Upper lobe of right lung (tissue), 1 donor: ENCODE measurements at regions of chr9 and their contacts with region 1.

Region 1: GRCh38 chr9:73081979-73082657 is 69.5 kb upstream of the ANXA1 start:
- DNase-seq: no peak
- ATAC-seq: peak; percentile 78
- H3K4me3 ChIP-seq: no peak overlapping the region
- H3K27ac ChIP-seq: no peak overlapping the region
- H3K4me1 ChIP-seq: no peaks in the 10 kb centered on the region
- H3K27me3 ChIP-seq: no peaks in the 10 kb centered on the region
- CTCF ChIP-seq: peak; percentile 82

Region 2: GRCh38 chr9:72856972-72857623 is 225.0 kb before region 1 on chr9:
- intact Hi-C with region 1: loop called (anchors 10 kb)
- DNase-seq: no peak
- ATAC-seq: peak; percentile 73
- H3K4me3 ChIP-seq: no peak overlapping the region
- H3K27ac ChIP-seq: no peak overlapping the region
- H3K4me1 ChIP-seq: peaks cover 9% of the 10 kb centered on the region
- H3K27me3 ChIP-seq: no peaks in the 10 kb centered on the region
- CTCF ChIP-seq: peak; percentile 66

Region 3: GRCh38 chr9:72997387-72997995 is 84.6 kb before region 1 on chr9:
- intact Hi-C with region 1: loop called (anchors 10 kb)
- DNase-seq: peak; percentile 56
- ATAC-seq: peak; percentile 48
- H3K4me3 ChIP-seq: no peak overlapping the region
- H3K27ac ChIP-seq: peak overlapping the region; percentile 6
- H3K4me1 ChIP-seq: peaks cover 16% of the 10 kb centered on the region
- H3K27me3 ChIP-seq: no peaks in the 10 kb centered on the region
- CTCF ChIP-seq: no peak

Region 4: DNA sequence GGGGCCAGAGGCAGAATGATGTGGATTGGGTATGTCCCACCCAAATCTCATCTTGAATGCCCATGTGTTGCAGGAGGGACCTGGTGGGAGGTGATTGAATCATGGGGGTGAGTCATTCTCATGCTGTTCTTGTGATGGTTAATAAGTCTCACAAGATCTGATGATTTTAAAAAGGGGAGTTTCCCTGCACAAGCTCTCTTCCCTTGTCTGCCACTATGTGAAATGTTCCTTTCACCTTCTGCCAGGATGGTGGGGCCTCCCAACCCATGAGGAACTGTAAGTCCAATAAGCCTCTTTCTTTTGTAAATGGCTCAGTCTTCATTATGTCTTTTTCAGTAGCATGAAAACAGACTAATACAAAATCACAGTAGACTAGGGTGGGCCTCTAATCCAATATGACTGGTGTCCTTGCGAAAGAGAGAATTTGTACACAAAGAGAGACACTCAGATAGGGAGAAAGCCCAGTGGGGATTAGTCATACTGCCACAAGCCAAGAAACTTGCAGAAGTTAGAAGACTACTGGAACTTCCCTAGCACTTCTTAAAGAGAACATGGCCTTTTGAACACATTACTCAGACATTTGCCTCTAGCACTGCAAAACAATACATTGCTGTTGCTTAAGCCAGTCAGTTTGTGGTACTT is 138.0 kb after region 1 on chr9:
- intact Hi-C with region 1: no loop called
- DNase-seq: no peak
- ATAC-seq: peak; percentile 96
- H3K4me3 ChIP-seq: no peak overlapping the region
- H3K27ac ChIP-seq: peak overlapping the region; percentile 18
- H3K4me1 ChIP-seq: no peaks in the 10 kb centered on the region
- H3K27me3 ChIP-seq: no peaks in the 10 kb centered on the region
- CTCF ChIP-seq: no peak